HEK293 (cell line): ENCODE measurements at regions of chr5 and their contacts with region 1.

Region 1: GRCh38 chr5:179763215-179763945 is 30.4 kb upstream of the LTC4S start:
- H3K4me3 ChIP-seq: no peak overlapping the region
- H3K27ac ChIP-seq: no peak overlapping the region
- H3K4me1 ChIP-seq: peaks cover 13% of the 10 kb centered on the region
- CTCF ChIP-seq: peak; percentile 84

Region 2: DNA sequence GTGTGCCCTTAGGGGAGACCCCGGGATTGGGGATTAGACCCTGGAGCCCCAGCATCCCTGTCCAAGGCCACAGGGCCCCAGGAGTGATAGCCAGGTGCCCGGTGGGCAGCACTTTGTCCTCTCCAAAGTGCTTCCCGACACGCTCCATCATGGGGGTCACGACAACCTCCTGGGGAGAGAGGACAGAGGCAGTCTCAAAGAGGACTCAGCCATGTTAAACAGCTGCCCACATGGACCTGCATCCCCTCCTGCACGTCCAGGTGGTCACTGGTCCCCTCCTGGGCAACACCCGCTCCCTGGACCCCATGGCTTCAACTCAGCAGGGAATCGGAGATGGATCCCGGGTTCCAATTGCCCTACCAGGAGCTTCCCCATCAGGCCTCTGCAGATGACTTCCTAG is 119.8 kb before region 1 on chr5:
- CTCF ChIA-PET with region 1: no interaction called
- POLR2A ChIA-PET with region 1: no interaction called
- H3K4me3 ChIP-seq: no peak overlapping the region
- H3K27ac ChIP-seq: no peak overlapping the region
- H3K4me1 ChIP-seq: no peaks in the 10 kb centered on the region
- CTCF ChIP-seq: no peak

Region 3: DNA sequence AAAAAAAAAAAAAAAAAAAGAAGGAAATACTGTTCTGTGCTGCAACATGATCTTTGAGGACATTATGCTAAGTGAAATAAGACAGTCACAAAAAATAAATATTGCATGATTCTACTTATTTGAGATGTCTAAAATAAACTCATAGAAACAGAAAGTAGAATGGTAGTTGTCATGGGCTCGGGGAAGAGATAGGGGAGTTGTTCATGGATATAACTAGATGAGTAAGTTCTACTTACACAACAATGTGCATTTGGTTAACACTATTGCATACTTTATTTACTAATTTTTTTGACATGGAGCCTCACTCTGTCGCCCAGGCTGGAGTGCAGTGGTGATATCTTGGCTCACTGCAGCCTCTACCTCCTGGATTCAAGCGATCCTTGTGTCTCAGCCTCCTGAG is 15.6 kb before region 1 on chr5:
- CTCF ChIA-PET with region 1: interaction called, 13 read pairs
- POLR2A ChIA-PET with region 1: no interaction called
- H3K4me3 ChIP-seq: no peak overlapping the region
- H3K27ac ChIP-seq: no peak overlapping the region
- H3K4me1 ChIP-seq: peaks cover 3% of the 10 kb centered on the region
- CTCF ChIP-seq: no peak

Region 4: DNA sequence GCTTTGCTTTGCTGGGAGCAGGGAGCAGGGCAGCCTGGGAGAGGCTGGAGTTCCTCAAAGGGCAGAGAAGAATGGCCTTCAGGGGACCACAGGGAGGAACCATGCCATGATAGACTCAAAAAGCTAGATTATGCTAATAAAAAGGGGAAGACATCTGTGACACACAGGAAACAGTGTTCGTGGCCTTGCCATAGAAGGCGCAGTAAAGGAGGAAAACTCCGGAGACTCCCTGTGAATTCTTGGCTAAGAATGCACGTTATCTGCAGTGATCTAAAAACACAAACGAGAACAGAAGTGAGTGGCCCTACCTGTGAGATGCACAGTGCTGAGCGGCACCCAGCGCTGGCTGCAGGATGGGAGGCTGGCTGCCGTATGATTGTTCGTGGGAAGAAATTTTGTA is 14.5 kb after region 1 on chr5:
- CTCF ChIA-PET with region 1: interaction called, 17 read pairs
- POLR2A ChIA-PET with region 1: interaction called, 3 read pairs
- H3K4me3 ChIP-seq: no peak overlapping the region
- H3K27ac ChIP-seq: no peak overlapping the region
- H3K4me1 ChIP-seq: no peaks in the 10 kb centered on the region
- CTCF ChIP-seq: no peak

Region 5: GRCh38 chr5:179795863-179796833 is 32.8 kb after region 1 on chr5:
- CTCF ChIA-PET with region 1: interaction called, 14 read pairs
- POLR2A ChIA-PET with region 1: interaction called, 11 read pairs
- H3K4me3 ChIP-seq: peak overlapping the region; percentile 65
- H3K27ac ChIP-seq: peak overlapping the region; percentile 85
- H3K4me1 ChIP-seq: no peaks in the 10 kb centered on the region
- CTCF ChIP-seq: peak; percentile 70